MCF 10A (cell line): ENCODE measurements at regions of chr19 and their contacts with region 1.

Region 1: GRCh38 chr19:9140159-9140874 is at the start of gene ZNF317:
- DNase-seq: peak; percentile 95
- H3K4me3 Mint-ChIP-seq: peak within 1 kb of the TSS; percentile 99
- H3K27ac Mint-ChIP-seq: peak within 1 kb of the TSS; percentile 97
- H3K4me1 Mint-ChIP-seq: no peaks in the 10 kb centered on the region
- H3K27me3 Mint-ChIP-seq: no peaks in the 10 kb centered on the region
- CTCF ChIP-seq: no peak
- total RNA-seq, gene ZNF317: 33.9 and 36.6 TPM in 2 replicates

Region 2: GRCh38 chr19:8988204-8988603 is 152.1 kb before region 1 on chr19:
- CTCF ChIA-PET with region 1: no interaction called
- POLR2A ChIA-PET with region 1: no interaction called
- intact Hi-C with region 1: no loop called
- DNase-seq: no peak
- H3K4me3 Mint-ChIP-seq: no peak overlapping the region
- H3K27ac Mint-ChIP-seq: no peak overlapping the region
- H3K4me1 Mint-ChIP-seq: no peaks in the 10 kb centered on the region
- H3K27me3 Mint-ChIP-seq: no peaks in the 10 kb centered on the region
- CTCF ChIP-seq: no peak

Region 3: DNA sequence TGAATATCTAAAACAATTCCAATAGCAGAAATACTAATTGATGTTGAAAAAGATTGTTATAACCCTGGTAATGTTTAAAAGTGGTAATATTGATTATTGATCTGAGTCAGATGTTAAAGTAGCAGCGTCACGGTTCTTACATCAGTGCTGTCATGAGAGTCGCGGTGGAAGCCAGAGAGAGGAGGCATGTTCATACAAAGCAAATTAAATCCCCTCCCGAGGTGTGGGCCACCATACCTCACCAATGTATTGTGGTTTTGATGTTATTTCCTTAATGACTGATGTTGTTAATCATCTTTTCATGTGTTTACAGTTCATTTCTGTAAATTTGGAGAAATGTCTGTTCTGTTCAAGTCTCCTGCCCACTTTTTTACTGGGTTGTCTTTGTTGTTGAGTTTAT is 11.1 kb after region 1 on chr19:
- CTCF ChIA-PET with region 1: no interaction called
- POLR2A ChIA-PET with region 1: no interaction called
- intact Hi-C with region 1: no loop called
- DNase-seq: no peak
- H3K4me3 Mint-ChIP-seq: no peak overlapping the region
- H3K27ac Mint-ChIP-seq: no peak overlapping the region
- H3K4me1 Mint-ChIP-seq: peaks cover 21% of the 10 kb centered on the region
- H3K27me3 Mint-ChIP-seq: no peaks in the 10 kb centered on the region
- CTCF ChIP-seq: no peak

Region 4: DNA sequence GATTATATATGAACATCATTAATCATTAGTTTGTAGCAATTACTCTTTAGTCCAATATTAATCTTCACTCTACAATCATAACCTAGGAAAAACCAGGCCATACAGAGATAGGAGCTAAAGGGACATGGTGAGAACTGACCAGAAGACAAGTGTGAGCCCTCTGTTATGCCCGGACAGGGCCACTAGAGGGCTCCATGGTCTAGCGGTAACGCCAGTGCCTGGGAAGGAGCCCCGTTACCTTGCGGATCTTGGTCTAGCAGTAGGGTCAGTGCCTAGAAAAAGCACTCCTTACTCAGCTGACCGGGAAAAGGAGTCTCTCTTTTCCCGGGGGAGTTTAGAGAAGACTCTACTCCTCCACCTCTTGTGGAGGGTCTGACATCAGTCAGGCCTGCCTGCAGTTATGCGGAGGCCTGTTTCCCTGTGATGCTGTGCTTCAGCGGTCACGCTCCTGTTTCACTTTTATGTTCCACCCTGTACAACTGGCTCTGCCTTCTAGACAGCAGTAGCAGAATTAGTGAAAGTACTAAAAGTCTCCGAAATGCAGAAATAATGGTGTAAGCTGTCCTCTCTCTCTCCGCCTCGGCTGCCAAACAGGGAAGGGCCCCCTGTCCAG is 65.3 kb after region 1 on chr19:
- CTCF ChIA-PET with region 1: interaction called, 3 read pairs
- POLR2A ChIA-PET with region 1: no interaction called
- intact Hi-C with region 1: loop called (anchors 2 kb)
- DNase-seq: peak; percentile 60
- H3K4me3 Mint-ChIP-seq: peak overlapping the region; percentile 52
- H3K27ac Mint-ChIP-seq: no peak overlapping the region
- H3K4me1 Mint-ChIP-seq: no peaks in the 10 kb centered on the region
- H3K27me3 Mint-ChIP-seq: no peaks in the 10 kb centered on the region
- CTCF ChIP-seq: peak; percentile 91

Region 5: GRCh38 chr19:9435279-9436268 is 295.3 kb after region 1 on chr19 and contains the start of gene ZNF266:
- CTCF ChIA-PET with region 1: no interaction called
- POLR2A ChIA-PET with region 1: no interaction called
- intact Hi-C with region 1: loop called (anchors 10 kb)
- DNase-seq: peak; percentile 89
- H3K4me3 Mint-ChIP-seq: peak within 1 kb of the TSS; percentile 88
- H3K27ac Mint-ChIP-seq: peak within 1 kb of the TSS; percentile 98
- H3K4me1 Mint-ChIP-seq: peaks cover 9% of the 10 kb centered on the region
- H3K27me3 Mint-ChIP-seq: no peaks in the 10 kb centered on the region
- CTCF ChIP-seq: peak; percentile 72
- total RNA-seq, gene ZNF266: 17.0 and 23.7 TPM in 2 replicates

Region 6: DNA sequence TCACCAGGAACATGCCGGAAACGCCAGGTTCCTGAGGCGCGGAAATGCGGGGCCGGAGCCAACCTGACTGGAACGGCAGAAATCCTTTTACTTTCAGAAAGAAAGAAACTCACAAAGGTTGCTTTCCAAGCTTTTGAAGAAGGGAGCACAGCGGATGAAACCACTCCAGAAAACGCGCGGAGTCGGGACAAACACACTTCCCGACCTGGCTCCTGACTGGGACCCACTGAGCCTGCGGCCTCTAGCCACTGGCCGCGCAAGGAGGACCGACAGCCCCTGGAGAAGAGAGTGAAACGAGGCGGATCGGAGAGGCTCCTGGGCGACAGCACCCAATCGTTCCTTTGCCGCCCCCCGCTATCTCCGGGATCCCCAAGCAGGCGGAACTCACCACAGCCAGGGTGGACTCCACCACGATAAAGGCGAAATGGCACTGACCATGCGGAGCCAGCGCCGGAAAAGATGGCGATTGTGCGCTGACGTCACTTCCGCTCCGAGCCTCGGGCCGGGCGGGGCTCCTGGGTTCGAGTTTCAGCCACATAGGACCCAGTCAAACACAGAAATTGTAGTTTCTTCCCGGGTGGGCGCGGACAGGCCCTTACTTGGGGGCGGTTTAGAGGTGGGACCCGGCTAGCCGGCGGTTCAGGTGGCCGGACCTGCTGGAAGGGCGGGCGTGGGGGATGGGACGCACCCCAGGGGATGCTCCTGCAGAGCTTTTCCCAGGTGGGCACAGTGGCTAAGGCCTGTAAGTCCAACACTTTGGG is 443.9 kb after region 1 on chr19 and contains the start of gene ZNF121:
- CTCF ChIA-PET with region 1: interaction called, 3 read pairs
- POLR2A ChIA-PET with region 1: no interaction called
- intact Hi-C with region 1: loop called (anchors 1 kb)
- DNase-seq: peak; percentile 83
- H3K4me3 Mint-ChIP-seq: peak within 1 kb of the TSS; percentile 93
- H3K27ac Mint-ChIP-seq: peak within 1 kb of the TSS; percentile 98
- H3K4me1 Mint-ChIP-seq: peaks cover 5% of the 10 kb centered on the region
- H3K27me3 Mint-ChIP-seq: no peaks in the 10 kb centered on the region
- CTCF ChIP-seq: no peak
- total RNA-seq, gene ZNF121: 51.9 and 63.9 TPM in 2 replicates

Region 7: GRCh38 chr19:9785367-9786331 is 645.3 kb after region 1 on chr19:
- CTCF ChIA-PET with region 1: interaction called, 3 read pairs
- POLR2A ChIA-PET with region 1: no interaction called
- intact Hi-C with region 1: loop called (anchors 1 kb)
- DNase-seq: peak; percentile 85
- H3K4me3 Mint-ChIP-seq: peak overlapping the region; percentile 93
- H3K27ac Mint-ChIP-seq: peak overlapping the region; percentile 71
- H3K4me1 Mint-ChIP-seq: peaks cover 16% of the 10 kb centered on the region
- H3K27me3 Mint-ChIP-seq: no peaks in the 10 kb centered on the region
- CTCF ChIP-seq: no peak

Region 8: GRCh38 chr19:9914315-9915207 is 774.2 kb after region 1 on chr19:
- CTCF ChIA-PET with region 1: no interaction called
- POLR2A ChIA-PET with region 1: no interaction called
- intact Hi-C with region 1: loop called (anchors 1 kb)
- DNase-seq: peak; percentile 84
- H3K4me3 Mint-ChIP-seq: peak overlapping the region; percentile 45
- H3K27ac Mint-ChIP-seq: no peak overlapping the region
- H3K4me1 Mint-ChIP-seq: peaks cover 14% of the 10 kb centered on the region
- H3K27me3 Mint-ChIP-seq: peaks cover 11% of the 10 kb centered on the region
- CTCF ChIP-seq: peak; percentile 51